ENCODE measurements at regions of chr1 and their contacts with region 1.

Region 1: DNA sequence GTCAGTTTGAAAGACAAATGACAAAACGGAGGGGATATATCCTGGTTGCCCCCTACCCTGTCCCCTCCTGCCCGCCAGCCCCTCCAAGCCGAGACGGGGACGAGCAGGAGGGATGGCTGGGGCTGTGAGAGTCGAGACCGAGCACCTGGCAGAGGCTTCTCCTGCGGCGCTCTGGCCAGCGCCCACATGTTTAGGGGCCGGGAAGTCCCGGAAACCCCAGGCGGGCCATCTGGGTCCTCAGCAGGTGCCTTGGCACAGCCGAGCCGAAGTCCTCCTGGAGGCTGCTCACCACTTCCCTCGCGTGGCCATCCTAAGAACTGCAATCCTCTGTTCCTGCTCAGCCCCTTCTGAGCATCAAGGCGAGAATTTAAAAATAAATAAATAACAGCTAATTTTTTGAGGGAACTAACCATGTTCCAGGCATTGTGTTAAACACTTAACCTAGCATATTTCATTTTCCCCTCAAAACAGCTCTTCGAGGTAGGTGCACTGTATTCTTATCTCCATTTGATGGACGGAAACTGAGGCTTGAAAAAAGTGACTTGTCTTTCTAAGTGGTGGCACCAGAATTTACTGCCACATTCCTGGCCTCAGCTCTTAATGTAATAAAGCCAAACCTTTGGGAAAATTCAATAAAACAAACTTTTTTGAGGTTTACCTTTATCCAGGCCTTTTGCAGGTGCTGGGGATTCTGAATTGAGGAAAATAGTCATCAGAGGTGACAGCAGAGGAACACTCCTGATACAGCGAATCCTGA is 3.5 kb upstream of the RIMS3 start:
- DNase-seq: peak; percentile 93
- H3K4me3 Mint-ChIP-seq: peak overlapping the region; percentile 39
- H3K27ac Mint-ChIP-seq: no peak overlapping the region
- H3K4me1 Mint-ChIP-seq: peaks cover 6% of the 10 kb centered on the region
- H3K27me3 Mint-ChIP-seq: no peaks in the 10 kb centered on the region

Region 2: DNA sequence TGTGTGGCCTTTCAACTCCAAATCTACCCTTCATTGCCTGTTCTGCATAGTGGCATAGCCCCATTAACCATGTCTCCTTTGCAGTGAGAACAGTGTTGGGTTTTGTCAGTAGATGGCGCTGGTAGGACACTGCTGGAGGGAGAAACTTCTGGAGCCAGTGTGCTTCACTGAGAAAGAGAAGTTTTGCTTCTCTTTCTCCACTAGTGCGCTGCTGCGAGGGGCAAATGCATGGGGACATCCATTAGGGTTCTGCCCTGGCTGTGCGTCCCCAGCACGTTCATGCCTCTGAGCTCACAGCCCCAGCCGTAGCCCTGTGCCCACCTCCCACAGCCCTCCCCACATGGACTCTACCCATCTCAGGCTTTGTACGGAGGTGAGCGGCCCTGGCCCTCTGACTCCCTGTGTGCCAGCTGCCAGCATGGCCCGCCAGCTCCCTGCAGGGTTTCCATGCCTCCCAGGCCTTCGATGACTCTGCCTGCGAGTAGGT is 56.6 kb before region 1 on chr1:
- CTCF ChIA-PET with region 1: interaction called, 4 read pairs
- intact Hi-C with region 1: loop called (anchors 1 kb)
- DNase-seq: peak; percentile 89
- H3K4me3 Mint-ChIP-seq: no peak overlapping the region
- H3K27ac Mint-ChIP-seq: no peak overlapping the region
- H3K4me1 Mint-ChIP-seq: no peaks in the 10 kb centered on the region
- H3K27me3 Mint-ChIP-seq: no peaks in the 10 kb centered on the region

Region 3: GRCh38 chr1:40625066-40625465 is 43.9 kb before region 1 on chr1:
- CTCF ChIA-PET with region 1: interaction called, 3 read pairs
- intact Hi-C with region 1: loop called (anchors 1 kb)
- DNase-seq: peak; percentile 58
- H3K4me3 Mint-ChIP-seq: no peak overlapping the region
- H3K27ac Mint-ChIP-seq: no peak overlapping the region
- H3K4me1 Mint-ChIP-seq: peaks cover 20% of the 10 kb centered on the region
- H3K27me3 Mint-ChIP-seq: no peaks in the 10 kb centered on the region

Region 4: DNA sequence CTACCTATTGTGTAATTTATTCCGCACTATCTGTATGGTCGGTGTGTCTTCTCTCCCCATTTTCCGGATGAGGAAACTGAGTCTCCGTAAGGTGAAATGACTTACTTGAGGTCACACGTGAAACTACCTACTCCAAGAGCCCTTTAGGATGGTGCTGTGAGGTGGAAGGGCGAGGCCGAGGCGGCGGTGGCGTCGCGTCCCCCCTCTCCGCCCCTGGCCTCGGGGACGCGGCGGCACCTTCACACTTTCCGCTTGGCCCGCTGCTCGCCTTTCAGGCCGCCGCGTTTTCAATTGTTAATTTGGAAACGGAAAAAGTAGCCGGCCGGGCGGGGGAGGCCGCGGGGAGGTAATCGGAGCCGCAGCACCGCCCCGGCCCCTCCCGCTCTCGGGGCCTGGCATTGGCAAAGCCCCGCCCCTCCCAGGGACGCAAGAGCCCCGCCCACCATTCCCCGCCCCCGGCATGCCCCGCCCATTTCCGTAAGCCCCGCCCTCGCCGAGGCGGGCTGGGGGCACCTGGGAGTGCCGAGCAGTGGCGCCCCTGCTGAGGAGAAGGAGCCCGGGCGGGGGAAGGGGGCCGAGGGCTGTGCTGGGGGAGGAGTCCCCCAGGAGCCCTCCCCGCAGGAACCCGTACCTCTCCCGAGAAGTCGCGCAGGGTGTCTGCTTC is 133.3 kb after region 1 on chr1:
- CTCF ChIA-PET with region 1: no interaction called
- intact Hi-C with region 1: loop called (anchors 5 kb)
- DNase-seq: peak; percentile 88
- H3K4me3 Mint-ChIP-seq: peak overlapping the region; percentile 38
- H3K27ac Mint-ChIP-seq: no peak overlapping the region
- H3K4me1 Mint-ChIP-seq: peaks cover 25% of the 10 kb centered on the region
- H3K27me3 Mint-ChIP-seq: no peaks in the 10 kb centered on the region

Region 5: DNA sequence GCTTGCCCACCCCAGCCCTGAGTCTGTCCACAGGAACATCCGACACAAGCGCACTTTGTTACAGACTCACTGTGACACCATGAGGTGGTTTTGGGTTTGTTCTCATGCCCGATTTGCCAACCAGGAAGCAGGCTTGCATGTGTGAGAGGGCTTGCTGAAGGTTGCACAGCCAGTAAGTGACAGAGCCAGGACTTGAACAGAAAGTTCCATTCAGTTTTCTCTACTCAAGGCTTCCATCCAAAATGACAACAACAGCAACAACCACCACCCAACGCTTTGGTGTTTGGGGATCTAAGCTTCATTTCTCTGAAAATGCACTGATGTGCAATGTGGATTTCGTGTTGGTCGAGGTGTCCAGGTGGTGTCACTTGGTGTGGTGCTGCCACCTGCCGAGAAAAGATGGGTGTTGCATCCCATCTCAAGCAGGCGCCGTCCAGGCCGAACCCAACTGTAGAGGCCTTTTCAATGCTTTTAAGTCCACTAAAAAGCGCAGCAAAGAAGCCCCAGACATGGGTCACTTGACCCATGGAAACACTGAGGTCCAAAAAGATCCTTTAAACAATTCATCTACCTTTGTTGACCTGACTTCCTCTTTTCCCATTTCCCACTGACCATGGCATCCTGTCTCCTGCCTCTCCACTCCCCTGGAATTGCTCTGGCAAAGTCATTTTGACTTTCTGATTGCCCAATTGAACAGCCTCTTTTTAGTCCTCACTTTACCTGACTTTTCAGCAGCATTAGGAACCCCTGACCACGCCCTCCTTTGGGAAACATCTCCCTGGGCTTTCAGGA is 181.1 kb after region 1 on chr1:
- CTCF ChIA-PET with region 1: no interaction called
- intact Hi-C with region 1: loop called (anchors 2 kb)
- DNase-seq: peak; percentile 87
- H3K4me3 Mint-ChIP-seq: no peak overlapping the region
- H3K27ac Mint-ChIP-seq: no peak overlapping the region
- H3K4me1 Mint-ChIP-seq: peaks cover 8% of the 10 kb centered on the region
- H3K27me3 Mint-ChIP-seq: no peaks in the 10 kb centered on the region